ENCODE measurements at regions of chrX and their contacts with region 1.

Region 1: GRCh38 chrX:65985922-65986588 is 53.8 kb downstream of the VSIG4 start:
- DNase-seq: peak; percentile 77
- H3K4me3 Mint-ChIP-seq: no peak overlapping the region
- H3K27ac Mint-ChIP-seq: peak overlapping the region; percentile 84
- H3K4me1 Mint-ChIP-seq: peaks cover 27% of the 10 kb centered on the region
- H3K27me3 Mint-ChIP-seq: no peaks in the 10 kb centered on the region

Region 2: DNA sequence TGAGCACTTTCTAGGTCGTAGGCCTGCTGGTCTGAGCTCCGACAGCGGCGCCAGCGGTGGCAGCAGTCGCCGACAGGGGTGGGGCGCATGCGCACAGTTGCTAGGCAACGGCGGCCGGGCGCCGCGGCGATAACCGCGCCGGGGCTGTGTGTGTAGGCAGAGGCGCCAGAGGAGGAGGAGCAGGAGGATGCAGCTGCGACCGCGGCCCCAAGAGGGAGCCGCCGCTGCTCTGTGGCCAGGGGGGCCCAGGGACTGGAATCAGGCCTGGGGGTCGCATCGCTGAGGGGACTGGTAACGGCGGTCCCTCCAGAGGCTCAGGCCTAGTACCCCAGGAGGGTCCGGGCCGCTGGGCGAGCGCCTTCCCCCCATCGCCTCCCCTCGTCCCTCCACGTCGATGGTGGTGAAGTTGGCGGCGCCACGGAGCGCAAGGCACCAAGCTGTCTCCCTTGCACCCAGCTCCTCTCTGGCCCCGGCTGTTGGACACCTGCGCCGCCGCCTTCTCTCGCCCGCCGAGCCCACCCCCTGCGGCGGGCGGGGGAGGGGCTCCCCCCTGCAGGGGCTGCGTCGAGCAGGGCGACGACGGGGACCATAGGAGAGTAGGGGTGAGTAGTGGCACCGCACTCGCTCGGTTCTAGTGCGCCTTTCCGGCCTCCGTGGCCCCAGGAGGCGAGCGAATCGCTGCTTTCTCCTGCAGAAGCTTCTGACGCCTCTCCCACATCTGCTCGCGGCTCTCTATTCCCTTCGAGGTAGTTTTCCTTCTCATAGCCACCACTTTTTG is 951.2 kb before region 1 on chrX:
- CTCF ChIA-PET with region 1: no interaction called
- intact Hi-C with region 1: loop called (anchors 5 kb)
- DNase-seq: peak; percentile 83
- H3K4me3 Mint-ChIP-seq: peak within 1 kb of the TSS; percentile 90
- H3K27ac Mint-ChIP-seq: peak within 1 kb of the TSS; percentile 88
- H3K4me1 Mint-ChIP-seq: peaks cover 27% of the 10 kb centered on the region
- H3K27me3 Mint-ChIP-seq: no peaks in the 10 kb centered on the region

Region 3: GRCh38 chrX:65595460-65595876 is 390.6 kb before region 1 on chrX:
- CTCF ChIA-PET with region 1: interaction called, 7 read pairs
- intact Hi-C with region 1: loop called (anchors 1 kb)
- DNase-seq: peak; percentile 99
- H3K4me3 Mint-ChIP-seq: peak overlapping the region; percentile 62
- H3K27ac Mint-ChIP-seq: peak overlapping the region; percentile 98
- H3K4me1 Mint-ChIP-seq: peaks cover 47% of the 10 kb centered on the region
- H3K27me3 Mint-ChIP-seq: no peaks in the 10 kb centered on the region

Region 4: GRCh38 chrX:65723706-65724105 is 262.3 kb before region 1 on chrX:
- CTCF ChIA-PET with region 1: no interaction called
- intact Hi-C with region 1: loop called (anchors 1 kb)
- DNase-seq: peak; percentile 60
- H3K4me3 Mint-ChIP-seq: peak overlapping the region; percentile 29
- H3K27ac Mint-ChIP-seq: peak overlapping the region; percentile 88
- H3K4me1 Mint-ChIP-seq: peaks cover 88% of the 10 kb centered on the region
- H3K27me3 Mint-ChIP-seq: no peaks in the 10 kb centered on the region

Region 5: GRCh38 chrX:65871661-65872311 is 114.3 kb before region 1 on chrX:
- CTCF ChIA-PET with region 1: no interaction called
- intact Hi-C with region 1: loop called (anchors 1 kb)
- DNase-seq: peak; percentile 43
- H3K4me3 Mint-ChIP-seq: no peak overlapping the region
- H3K27ac Mint-ChIP-seq: no peak overlapping the region
- H3K4me1 Mint-ChIP-seq: peaks cover 2% of the 10 kb centered on the region
- H3K27me3 Mint-ChIP-seq: no peaks in the 10 kb centered on the region

Region 6: GRCh38 chrX:65941775-65942174 is 44.3 kb before region 1 on chrX:
- CTCF ChIA-PET with region 1: no interaction called
- intact Hi-C with region 1: no loop called
- DNase-seq: no peak
- H3K4me3 Mint-ChIP-seq: no peak overlapping the region
- H3K27ac Mint-ChIP-seq: no peak overlapping the region
- H3K4me1 Mint-ChIP-seq: peaks cover 18% of the 10 kb centered on the region
- H3K27me3 Mint-ChIP-seq: no peaks in the 10 kb centered on the region

Region 7: DNA sequence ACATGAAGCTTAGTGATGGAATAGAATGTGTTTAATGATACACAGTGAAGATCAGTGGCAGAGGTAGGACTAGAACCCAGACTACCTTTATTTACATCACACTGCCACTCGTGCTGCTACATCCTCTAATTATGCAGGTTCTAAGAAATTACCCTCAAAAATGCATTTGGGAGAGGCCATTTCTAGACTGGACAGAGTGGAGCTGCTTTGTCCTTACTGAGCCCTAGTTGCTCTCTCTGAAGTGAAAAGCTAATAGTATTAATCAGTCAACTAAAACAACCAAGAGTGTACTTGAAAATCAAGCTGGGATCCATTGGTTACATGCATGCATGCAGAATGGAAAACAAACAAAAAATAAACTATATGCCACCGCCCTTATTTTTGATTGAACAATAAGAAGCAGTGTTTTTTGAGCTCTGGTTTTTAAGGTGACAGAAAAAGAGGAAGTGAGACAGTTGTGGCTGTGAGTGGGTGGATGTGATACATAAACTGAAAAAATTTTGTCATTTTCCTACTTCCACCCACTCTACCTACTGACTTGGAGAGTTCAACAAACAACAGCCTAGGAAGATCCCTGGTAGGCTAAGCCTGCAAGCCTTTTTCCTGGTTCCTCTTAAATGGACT is 60.7 kb after region 1 on chrX:
- CTCF ChIA-PET with region 1: no interaction called
- intact Hi-C with region 1: loop called (anchors 2 kb)
- DNase-seq: peak; percentile 69
- H3K4me3 Mint-ChIP-seq: no peak overlapping the region
- H3K27ac Mint-ChIP-seq: peak overlapping the region; percentile 91
- H3K4me1 Mint-ChIP-seq: peaks cover 30% of the 10 kb centered on the region
- H3K27me3 Mint-ChIP-seq: no peaks in the 10 kb centered on the region